IMR-90 (cell line): ENCODE measurements at regions of chr11 and their contacts with region 1.

Region 1: DNA sequence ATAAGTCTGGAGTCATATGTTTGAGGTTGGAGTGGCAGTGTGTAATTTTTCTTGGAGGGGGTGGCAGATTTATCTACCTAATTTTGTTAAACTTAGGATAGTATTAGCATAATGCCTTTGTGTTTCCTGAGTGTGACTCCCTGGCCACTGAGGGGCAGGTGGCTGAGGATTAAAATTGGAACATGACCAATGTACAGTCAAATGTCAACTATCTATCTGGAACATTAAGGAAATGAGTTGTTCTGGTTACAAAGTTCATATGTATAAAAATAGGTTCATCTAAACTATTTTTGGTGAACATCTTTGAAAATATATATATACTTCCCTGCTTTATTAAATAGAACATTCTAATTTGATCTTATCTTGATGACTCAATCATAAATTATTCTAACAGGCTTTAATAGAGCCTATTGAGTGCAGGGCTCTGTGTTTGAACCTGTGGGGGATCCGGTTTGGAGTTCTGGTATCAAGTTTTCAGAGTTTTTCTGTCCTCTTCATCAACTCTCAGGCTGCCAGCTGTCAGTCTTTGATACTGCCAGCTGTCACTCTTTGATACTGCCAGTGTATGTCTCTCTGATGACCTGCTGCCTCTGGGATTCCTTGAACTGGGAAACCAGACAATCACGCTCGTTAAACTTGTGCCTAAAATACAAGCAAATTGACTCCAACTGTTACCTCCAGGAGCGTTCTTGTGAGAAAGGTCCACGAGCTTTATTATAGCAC is 309.6 kb downstream of the METTL15 start:
- DNase-seq: peak; percentile 17
- ATAC-seq: no peak
- H3K4me3 ChIP-seq: no peak overlapping the region
- H3K27ac ChIP-seq: no peak overlapping the region
- H3K4me1 ChIP-seq: no peaks in the 10 kb centered on the region
- H3K27me3 ChIP-seq: no peaks in the 10 kb centered on the region
- CTCF ChIP-seq: no peak
- POLR2A ChIP-seq: no peak
- RAD21 ChIP-seq: no peak

Region 2: DNA sequence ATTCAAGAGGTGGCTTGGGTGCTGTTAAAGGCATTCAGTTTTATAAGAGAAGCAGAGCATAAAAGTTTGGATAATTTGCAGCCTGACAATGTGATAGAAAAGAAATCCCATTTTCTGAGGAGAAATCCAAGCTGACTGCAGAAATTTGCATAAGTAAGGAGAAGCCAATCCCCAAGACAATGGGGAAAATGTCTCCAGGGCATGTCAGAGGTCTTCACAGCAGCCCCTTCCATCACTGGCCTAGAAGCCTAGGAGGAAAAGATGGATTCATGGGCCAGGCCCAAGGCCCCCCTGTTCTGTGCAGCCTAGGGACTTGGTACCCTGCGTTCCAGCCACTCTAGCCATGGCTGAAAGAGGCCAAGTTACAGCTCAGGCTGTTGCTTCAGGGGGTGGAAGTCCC is 102.3 kb before region 1 on chr11:
- CTCF ChIA-PET with region 1: no interaction called
- POLR2A ChIA-PET with region 1: no interaction called
- dilution Hi-C with region 1: no loop called
- in situ Hi-C with region 1: no loop called
- intact Hi-C with region 1: loop called (anchors 2 kb)
- DNase-seq: no peak
- ATAC-seq: no peak
- H3K4me3 ChIP-seq: no peak overlapping the region
- H3K27ac ChIP-seq: no peak overlapping the region
- H3K4me1 ChIP-seq: no peaks in the 10 kb centered on the region
- H3K27me3 ChIP-seq: no peaks in the 10 kb centered on the region
- CTCF ChIP-seq: no peak
- POLR2A ChIP-seq: no peak
- RAD21 ChIP-seq: no peak